ENCODE measurements at regions of chr6 and their contacts with region 1.

Region 1: GRCh38 chr6:6547110-6547879 is 41.2 kb upstream of the LY86 start:
- DNase-seq: peak; percentile 85 to 90
- ATAC-seq: peak; percentile 93 to 98 (median 96)
- H3K4me3 ChIP-seq: peak overlapping the region; percentile 64
- H3K27ac ChIP-seq: peak overlapping the region; percentile 6
- H3K4me1 ChIP-seq: peaks cover 7% of the 10 kb centered on the region
- H3K27me3 ChIP-seq: peaks cover 2 to 42% (median 3%) of the 10 kb centered on the region in 3 donors
- CTCF ChIP-seq: peak; percentile 92

Region 2: DNA sequence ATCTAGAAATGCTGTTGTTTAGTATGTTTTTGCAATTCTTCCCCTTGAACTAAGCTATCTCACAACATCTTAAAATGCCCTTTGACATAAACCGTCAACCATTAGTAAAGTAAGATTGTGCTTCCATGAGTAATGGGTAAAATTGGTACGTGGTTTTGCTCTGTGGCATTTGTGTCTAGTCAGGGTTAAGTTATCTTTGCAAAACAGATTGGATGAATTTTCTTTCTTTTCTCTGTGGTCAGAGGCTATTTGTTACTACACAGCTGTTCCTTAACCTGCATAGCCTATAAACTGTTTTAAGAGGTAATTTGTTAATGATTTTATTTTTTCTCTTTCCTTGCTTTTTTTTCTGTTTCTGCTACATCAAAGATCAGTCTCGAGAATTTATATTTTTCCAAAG is 1618.9 kb before region 1 on chr6:
- intact Hi-C with region 1: no loop called
- DNase-seq: no peak
- ATAC-seq: no peak
- H3K4me3 ChIP-seq: no peak overlapping the region
- H3K27ac ChIP-seq: no peak overlapping the region
- H3K4me1 ChIP-seq: peaks cover 39% of the 10 kb centered on the region
- H3K27me3 ChIP-seq: no peaks in the 10 kb centered on the region
- CTCF ChIP-seq: no peak

Region 3: DNA sequence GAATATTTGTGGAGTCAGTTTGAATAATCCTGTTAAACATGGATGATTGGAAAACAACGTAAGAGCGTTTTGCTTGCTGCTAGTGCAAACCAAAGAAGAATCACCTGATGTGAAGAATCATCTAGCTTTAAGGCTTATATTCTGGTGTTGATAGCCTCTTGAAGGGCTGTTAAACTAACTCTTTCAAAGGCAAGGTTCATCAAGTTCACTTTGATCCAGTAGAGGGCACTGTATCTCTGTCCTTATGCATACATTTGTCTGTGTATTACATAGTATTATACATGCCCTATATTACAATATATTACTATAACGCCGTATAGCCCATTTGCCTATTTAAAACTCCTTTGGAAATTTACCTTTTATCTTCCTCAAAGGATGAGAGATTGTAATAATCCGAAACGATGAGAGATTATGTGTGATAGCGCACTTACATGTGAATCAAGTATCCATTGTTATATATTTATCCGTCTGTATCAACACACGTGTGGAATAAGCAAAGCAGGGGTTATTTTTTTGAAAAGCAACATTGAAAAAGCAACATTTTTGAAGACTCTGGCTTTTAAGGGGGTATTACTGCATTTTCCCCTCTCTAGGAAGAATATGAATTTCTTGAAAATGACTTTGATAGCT is 489.8 kb before region 1 on chr6:
- intact Hi-C with region 1: loop called in 1 of 2 experiments (anchors 10 kb)
- DNase-seq: no peak
- ATAC-seq: no peak
- H3K4me3 ChIP-seq: no peak overlapping the region
- H3K27ac ChIP-seq: no peak overlapping the region
- H3K4me1 ChIP-seq: no peaks in the 10 kb centered on the region
- H3K27me3 ChIP-seq: peaks cover 0 to 2% (median 0%) of the 10 kb centered on the region in 3 donors
- CTCF ChIP-seq: peak; percentile 45

Region 4: GRCh38 chr6:6635869-6636268 is 88.6 kb after region 1 on chr6:
- intact Hi-C with region 1: no loop called
- DNase-seq: no peak
- ATAC-seq: no peak
- H3K4me3 ChIP-seq: no peak overlapping the region
- H3K27ac ChIP-seq: no peak overlapping the region
- H3K4me1 ChIP-seq: no peaks in the 10 kb centered on the region
- H3K27me3 ChIP-seq: peaks cover 0 to 2% (median 0%) of the 10 kb centered on the region in 3 donors
- CTCF ChIP-seq: no peak

Region 5: DNA sequence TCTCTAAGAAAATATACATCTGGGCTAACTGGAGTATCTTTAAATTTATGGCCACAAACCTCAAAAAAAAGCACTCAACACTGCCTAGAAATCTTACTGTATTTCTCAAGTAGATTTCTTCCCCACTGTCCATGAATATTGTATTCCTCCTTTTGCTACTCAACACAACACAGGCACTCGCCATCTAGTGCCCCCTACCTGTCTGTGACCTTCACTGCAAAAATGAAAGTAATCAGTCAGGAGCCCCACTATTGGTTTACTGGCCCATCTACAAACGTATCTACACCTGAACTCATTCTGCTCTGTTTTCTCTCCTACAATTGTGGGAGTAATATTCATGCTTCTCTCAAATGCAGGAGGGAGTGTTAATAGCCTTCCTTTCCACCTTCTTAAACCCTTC is 99.6 kb after region 1 on chr6:
- intact Hi-C with region 1: no loop called
- DNase-seq: no peak
- ATAC-seq: no peak
- H3K4me3 ChIP-seq: no peak overlapping the region
- H3K27ac ChIP-seq: no peak overlapping the region
- H3K4me1 ChIP-seq: no peaks in the 10 kb centered on the region
- H3K27me3 ChIP-seq: no peaks in the 10 kb centered on the region
- CTCF ChIP-seq: no peak

Measured in psoas muscle (tissue), 8 donors.